GM10248 (cell line): ENCODE measurements at regions of chr19 and their contacts with region 1.

Region 1: GRCh38 chr19:58519355-58520256 is at the start of gene ZBTB45:
- DNase-seq: peak; percentile 86
- CTCF ChIP-seq: peak; percentile 82

Region 2: DNA sequence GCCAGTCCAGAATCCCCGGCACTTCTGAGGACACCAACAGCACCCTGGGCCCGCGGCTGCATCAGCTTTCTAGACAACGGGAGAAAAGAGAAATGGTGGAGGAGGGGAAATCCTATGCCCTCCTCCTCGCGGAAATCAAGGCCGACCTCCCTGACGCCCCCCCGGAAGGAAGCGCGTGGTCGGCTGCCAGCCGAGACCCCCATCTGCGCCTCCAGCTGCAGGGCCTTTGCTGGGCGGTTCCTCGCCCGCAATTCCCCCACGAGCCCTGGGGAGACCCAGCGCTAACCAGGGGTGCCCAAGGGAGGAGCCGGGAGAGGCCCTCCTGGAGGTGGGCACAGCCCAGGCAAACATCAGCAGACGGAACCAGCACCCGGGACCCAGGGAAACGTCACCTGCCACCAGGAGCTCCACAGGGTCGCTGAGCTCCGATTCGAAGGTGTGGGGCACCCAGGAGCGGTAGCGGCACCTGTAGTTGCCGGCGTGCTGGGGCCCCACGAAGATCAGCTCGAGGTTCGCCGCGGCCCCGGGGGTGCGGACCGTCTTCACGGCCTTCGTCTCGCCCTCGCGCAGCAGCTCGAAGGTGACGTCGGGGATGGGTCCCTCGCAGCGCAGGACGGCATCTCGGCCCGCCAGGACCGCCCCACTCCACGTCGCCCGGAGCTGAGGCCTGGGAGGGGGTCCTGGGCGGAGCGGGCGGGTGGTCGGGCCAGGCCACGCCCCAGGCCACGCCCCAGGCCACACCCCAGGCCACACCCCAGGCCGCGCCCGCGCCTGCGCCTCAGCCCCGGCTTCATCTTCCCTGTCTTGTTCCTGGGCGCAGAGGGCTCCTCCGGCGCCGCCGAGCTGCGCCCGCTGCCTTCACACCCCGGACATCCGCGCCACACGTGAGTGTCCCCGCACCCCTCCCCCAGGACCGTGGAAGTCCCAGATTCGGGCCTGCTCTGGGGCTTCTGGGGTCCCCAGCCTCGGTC is 172.4 kb before region 1 on chr19:
- CTCF ChIA-PET with region 1: interaction called, 12 read pairs
- POLR2A ChIA-PET with region 1: no interaction called
- DNase-seq: peak; percentile 96
- CTCF ChIP-seq: no peak

Region 3: GRCh38 chr19:58499021-58499927 is 20.3 kb before region 1 on chr19:
- CTCF ChIA-PET with region 1: interaction called, 39 read pairs
- POLR2A ChIA-PET with region 1: interaction called, 4 read pairs
- DNase-seq: peak; percentile 100
- CTCF ChIP-seq: no peak

Region 4: GRCh38 chr19:58543826-58544590 is 24.4 kb after region 1 on chr19 and contains the start of gene TRIM28:
- CTCF ChIA-PET with region 1: interaction called, 23 read pairs
- POLR2A ChIA-PET with region 1: interaction called, 5 read pairs
- DNase-seq: peak; percentile 100
- CTCF ChIP-seq: no peak

Region 5: GRCh38 chr19:58575183-58576064 is 55.8 kb after region 1 on chr19:
- CTCF ChIA-PET with region 1: interaction called, 60 read pairs
- POLR2A ChIA-PET with region 1: interaction called, 4 read pairs
- DNase-seq: peak; percentile 87
- CTCF ChIP-seq: peak; percentile 36